Dendritic cell treated with granulocyte-macrophage colony-stimulating factor and Interleukin-4, amounts not matched to agents 40 ng/mL and 50 ng/mL, for 4 days (primary cell): ENCODE measurements at regions of chr15 and their contacts with region 1.

Region 1: DNA sequence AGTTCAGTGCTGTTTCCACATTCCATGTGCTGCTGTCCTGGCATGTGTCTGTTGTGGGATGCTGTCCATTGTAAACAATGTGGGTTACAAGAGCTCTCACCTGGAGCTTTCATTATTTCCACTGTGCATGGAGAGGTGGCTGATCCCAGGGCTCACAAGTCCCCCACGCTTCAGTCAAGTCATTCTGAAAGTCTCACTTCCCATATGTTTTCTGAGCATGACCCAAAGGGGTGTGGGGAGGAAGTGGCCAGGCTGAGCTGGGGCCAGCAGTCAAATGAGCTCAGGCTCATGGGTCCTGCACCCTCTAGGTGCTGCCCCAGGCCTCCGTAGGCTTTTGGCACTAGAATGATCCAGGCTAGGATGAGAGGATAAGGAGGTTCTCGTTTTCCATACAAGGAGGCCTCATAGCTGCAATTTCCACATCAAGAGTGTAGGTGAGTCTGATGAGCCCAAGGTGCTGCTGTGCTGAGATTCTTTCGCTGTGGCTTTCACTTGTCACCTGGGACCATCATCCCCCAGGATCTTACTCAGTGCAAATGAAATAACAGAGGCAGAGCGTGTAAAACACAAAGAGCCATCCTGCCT is 22.0 kb downstream of the STARD5 start:
- H3K4me3 Mint-ChIP-seq: peak overlapping the region; percentile 74
- H3K27ac Mint-ChIP-seq: peak overlapping the region; percentile 94
- H3K4me1 Mint-ChIP-seq: peaks cover 95% of the 10 kb centered on the region
- H3K27me3 Mint-ChIP-seq: no peaks in the 10 kb centered on the region

Region 2: DNA sequence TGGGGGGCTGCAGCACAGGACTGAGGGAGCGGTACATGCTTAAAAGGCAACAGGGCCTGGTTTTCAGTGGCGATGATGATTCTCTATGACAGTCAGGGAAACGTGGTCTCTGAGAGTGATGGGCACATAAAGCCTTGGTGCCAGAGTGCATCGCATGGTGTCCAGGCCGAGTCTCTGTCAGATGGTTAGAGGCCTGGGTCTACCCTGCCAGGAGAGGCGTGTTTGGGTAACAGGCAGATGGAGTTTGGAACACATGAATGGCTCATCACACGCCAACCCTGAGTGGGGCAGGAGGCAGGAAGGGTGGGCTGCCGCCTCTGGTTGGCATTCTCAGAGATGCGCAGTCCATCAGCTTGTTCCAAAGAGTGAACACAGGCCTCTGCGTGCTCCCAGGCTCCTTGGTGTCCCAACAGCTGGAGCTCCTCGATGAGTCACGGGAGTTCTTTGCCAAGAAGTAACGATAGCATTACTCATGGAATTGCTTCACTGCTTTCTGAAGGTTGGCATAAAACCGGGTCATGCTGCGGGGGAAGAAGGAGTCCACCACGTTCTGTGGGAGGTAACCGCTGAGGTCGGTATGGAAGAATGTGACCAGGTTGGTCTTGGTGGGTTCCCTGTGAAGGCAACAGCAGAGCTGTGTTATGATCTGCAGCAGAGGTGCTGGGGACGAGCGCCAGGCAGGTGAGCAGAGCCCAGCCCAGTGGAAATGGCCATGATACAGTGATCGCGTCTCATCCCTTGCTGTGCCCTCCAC is 11.1 kb after region 1 on chr15:
- intact Hi-C with region 1: loop called (anchors 1 kb)
- H3K4me3 Mint-ChIP-seq: no peak overlapping the region
- H3K27ac Mint-ChIP-seq: peak overlapping the region; percentile 94
- H3K4me1 Mint-ChIP-seq: peaks cover 74% of the 10 kb centered on the region
- H3K27me3 Mint-ChIP-seq: no peaks in the 10 kb centered on the region

Region 3: GRCh38 chr15:81323944-81324881 is 22.3 kb after region 1 on chr15 and contains the start of gene STARD5:
- intact Hi-C with region 1: loop called (anchors 2 kb)
- H3K4me3 Mint-ChIP-seq: peak within 1 kb of the TSS; percentile 84
- H3K27ac Mint-ChIP-seq: peak within 1 kb of the TSS; percentile 80
- H3K4me1 Mint-ChIP-seq: peaks cover 32% of the 10 kb centered on the region
- H3K27me3 Mint-ChIP-seq: peaks cover 6% of the 10 kb centered on the region